ENCODE measurements at regions of chr5 and their contacts with region 1.

Region 1: GRCh38 chr5:40386289-40386688 is 293.4 kb upstream of the PTGER4 start:
- DNase-seq: no peak
- H3K4me3 ChIP-seq: no peak overlapping the region
- H3K27ac ChIP-seq: peak overlapping the region; percentile 91
- H3K4me1 ChIP-seq: peaks cover 56% of the 10 kb centered on the region
- H3K27me3 ChIP-seq: no peaks in the 10 kb centered on the region
- CTCF ChIP-seq: no peak

Region 2: DNA sequence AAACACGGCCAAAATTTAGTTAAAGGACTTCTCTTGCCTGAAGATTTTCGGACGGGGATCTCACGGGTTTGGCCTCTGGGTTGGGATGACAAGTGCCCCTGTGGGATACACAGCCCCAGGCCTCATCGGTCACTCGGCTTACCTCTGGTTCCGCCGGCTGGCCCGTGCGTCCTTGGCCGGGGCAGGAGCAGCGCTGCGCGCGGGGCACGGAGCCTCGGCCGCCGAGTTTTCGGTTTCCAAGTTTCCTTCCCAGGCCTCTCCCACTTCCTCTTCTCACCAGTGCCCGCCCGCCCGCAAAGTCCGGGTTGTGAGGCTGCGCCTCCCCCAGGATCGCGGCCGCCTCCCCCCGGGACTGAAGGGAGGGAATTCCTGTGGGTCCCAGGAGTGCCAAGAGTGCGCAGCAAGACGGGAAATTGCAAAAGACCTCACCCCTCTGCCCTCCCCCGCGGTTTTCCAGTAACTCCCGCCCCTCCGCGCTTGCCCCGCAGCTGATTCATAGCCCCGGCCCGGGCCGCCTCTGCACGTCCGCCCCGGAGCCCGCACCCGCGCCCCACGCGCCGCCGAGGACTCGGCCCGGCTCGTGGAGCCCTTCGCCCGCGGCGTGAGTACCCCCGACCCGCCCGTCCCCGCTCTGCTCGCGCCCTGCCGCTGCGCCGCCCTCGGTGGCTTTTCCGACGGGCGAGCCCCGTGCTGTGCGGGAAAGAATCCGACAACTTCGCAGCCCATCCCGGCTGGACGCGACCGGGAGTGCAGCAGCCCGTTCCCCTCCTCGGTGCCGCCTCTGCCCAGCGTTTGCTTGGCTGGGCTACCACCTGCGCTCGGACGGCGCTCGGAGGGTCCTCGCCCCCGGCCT is 1540.5 kb before region 1 on chr5 and contains the start of gene OSMR:
- CTCF ChIA-PET with region 1: no interaction called
- POLR2A ChIA-PET with region 1: no interaction called
- intact Hi-C with region 1: loop called (anchors 10 kb)
- DNase-seq: peak; percentile 92 to 100
- H3K4me3 ChIP-seq: peak within 1 kb of the TSS; percentile 79
- H3K27ac ChIP-seq: peak within 1 kb of the TSS; percentile 95
- H3K4me1 ChIP-seq: peaks cover 48% of the 10 kb centered on the region
- H3K27me3 ChIP-seq: no peaks in the 10 kb centered on the region
- CTCF ChIP-seq: no peak
- total RNA-seq, gene OSMR: 45.3 and 65.4 TPM in 2 replicates

Region 3: DNA sequence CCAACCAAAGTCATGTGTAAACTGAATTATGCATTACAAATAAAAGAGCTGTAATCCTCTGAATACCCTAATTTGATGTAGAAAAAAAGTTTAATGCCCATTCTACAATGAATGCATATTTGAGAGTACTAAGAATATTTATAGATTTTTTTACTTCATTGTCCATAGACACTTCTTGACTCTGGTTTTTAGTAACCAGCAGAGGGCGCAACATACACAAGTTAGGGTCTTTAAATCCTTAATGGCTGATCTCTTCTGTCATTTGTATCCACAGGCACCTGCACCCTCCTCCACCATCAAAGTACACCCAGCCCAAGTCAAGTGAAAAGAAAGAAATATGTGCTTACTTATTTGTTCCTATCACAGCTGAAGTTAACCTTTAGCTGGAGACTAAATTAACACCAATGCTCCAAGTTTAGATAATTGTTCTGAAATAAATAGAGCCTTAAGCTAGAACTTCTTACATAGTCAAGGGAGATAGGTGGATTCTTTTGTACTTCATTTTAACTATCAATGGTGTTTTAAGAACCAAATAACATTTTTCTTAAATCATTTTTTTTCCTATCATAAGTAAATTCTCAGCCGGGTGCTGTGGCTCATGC is 437.3 kb before region 1 on chr5:
- CTCF ChIA-PET with region 1: no interaction called
- POLR2A ChIA-PET with region 1: no interaction called
- intact Hi-C with region 1: loop called (anchors 1 kb)
- DNase-seq: peak; percentile 56 to 66
- H3K4me3 ChIP-seq: no peak overlapping the region
- H3K27ac ChIP-seq: no peak overlapping the region
- H3K4me1 ChIP-seq: no peaks in the 10 kb centered on the region
- H3K27me3 ChIP-seq: no peaks in the 10 kb centered on the region
- CTCF ChIP-seq: peak; percentile 96

Region 4: GRCh38 chr5:40307920-40308319 is 78.4 kb before region 1 on chr5:
- CTCF ChIA-PET with region 1: no interaction called
- POLR2A ChIA-PET with region 1: no interaction called
- intact Hi-C with region 1: no loop called
- DNase-seq: no peak
- H3K4me3 ChIP-seq: no peak overlapping the region
- H3K27ac ChIP-seq: no peak overlapping the region
- H3K4me1 ChIP-seq: no peaks in the 10 kb centered on the region
- H3K27me3 ChIP-seq: no peaks in the 10 kb centered on the region
- CTCF ChIP-seq: no peak

Region 5: DNA sequence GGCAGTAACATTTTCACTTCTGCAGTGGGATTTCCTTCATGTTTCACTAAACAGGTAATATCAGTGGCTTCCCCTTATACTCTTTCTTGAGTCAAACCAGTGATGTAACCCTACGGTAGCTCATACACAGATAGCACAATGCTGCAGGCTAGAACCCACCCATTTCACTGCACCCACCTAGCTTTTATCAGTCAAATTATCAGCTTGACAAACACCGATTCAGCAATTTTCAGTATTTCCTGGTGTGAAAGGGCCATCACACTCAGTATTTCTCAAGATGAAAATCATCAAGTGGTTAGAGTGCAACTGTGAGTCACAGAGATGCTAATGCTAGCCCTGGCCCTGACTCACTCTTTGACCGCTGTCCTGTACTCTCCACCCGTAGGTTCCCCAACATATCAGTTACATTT is 51.2 kb after region 1 on chr5:
- CTCF ChIA-PET with region 1: interaction called, 3 read pairs
- POLR2A ChIA-PET with region 1: interaction called, 7 read pairs
- intact Hi-C with region 1: loop called (anchors 1 kb)
- DNase-seq: peak; percentile 77 to 99
- H3K4me3 ChIP-seq: no peak overlapping the region
- H3K27ac ChIP-seq: peak overlapping the region; percentile 74
- H3K4me1 ChIP-seq: peaks cover 22% of the 10 kb centered on the region
- H3K27me3 ChIP-seq: no peaks in the 10 kb centered on the region
- CTCF ChIP-seq: no peak

Region 6: GRCh38 chr5:40551496-40552491 is 165.5 kb after region 1 on chr5:
- CTCF ChIA-PET with region 1: no interaction called
- POLR2A ChIA-PET with region 1: interaction called, 3 read pairs
- intact Hi-C with region 1: loop called (anchors 1 kb)
- DNase-seq: peak; percentile 81 to 98
- H3K4me3 ChIP-seq: peak overlapping the region; percentile 15; the same call in 1 of the 2 replicates
- H3K27ac ChIP-seq: peak overlapping the region; percentile 77
- H3K4me1 ChIP-seq: peaks cover 27% of the 10 kb centered on the region
- H3K27me3 ChIP-seq: no peaks in the 10 kb centered on the region
- CTCF ChIP-seq: no peak

Region 7: DNA sequence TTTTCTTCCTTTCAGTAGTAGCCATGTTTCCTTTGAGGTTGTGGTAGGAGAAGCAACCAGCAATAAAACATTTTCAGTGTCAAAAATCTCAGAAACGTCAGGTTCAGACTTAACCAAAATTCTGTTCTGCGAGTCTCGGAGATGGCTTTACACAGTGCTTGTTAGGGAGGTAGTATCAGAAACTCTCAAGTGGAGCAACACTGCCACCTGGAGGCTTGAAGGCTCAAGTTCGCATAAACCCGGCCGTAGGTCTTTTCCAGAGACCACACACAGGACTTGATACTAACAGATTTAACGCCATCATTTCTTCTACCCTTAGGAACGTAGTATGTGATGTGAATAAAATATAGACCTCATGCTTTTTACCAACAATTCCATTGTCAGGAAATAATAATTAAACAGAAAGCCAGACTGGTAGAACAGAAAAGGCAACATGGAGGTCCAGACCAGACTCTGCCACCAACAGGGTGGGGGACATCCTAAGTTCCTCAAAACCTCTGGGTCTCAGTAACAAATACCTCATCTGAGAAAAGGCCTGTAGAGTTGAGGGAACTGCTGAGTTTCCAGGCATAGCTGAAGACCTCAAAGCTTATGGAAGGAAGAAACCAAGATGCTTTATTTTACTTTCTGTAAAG is 302.0 kb after region 1 on chr5:
- CTCF ChIA-PET with region 1: no interaction called
- POLR2A ChIA-PET with region 1: interaction called, 3 read pairs
- intact Hi-C with region 1: loop called (anchors 2 kb)
- DNase-seq: peak; percentile 80 to 93
- H3K4me3 ChIP-seq: no peak overlapping the region
- H3K27ac ChIP-seq: 0 out of 2 replicates have a peak overlapping the region, but pooled peaks have one; percentile 2
- H3K4me1 ChIP-seq: peaks cover 52% of the 10 kb centered on the region
- H3K27me3 ChIP-seq: no peaks in the 10 kb centered on the region
- CTCF ChIP-seq: peak; percentile 98

Region 8: DNA sequence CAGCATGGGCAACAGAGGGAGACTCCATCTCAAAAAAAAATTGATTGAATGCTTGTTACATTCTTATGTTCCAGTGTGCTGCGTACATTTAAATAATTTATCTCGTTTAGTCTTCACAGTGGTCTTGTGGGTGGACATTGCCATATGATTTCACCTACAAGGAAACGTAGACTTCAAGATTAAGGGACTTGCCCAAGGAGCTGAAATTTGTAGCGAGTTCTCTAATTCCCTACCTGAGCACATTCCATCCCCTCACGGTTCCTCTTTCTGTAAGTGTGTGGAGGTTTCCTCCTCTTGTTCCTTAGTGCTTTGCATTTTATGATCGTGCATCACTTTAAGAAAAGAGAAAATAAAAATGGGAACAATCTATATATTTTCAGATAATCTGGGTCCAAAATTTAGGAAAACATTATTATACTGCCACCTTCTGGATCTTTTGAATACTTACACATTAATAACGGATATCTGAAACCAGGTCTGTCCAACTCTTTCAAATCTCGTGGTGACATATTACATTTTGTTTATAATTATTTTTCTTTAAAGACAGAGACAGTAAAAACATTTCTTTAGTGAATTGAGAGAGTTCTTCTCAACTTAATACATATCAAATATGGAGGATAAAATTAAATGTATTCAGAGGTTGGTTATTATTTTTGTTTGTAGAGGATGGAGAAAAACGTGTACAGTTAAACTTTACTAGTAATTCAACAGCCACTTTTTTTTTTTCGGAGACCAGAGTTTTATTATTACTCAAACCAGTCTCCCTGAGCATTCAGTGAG is 493.1 kb after region 1 on chr5:
- CTCF ChIA-PET with region 1: no interaction called
- POLR2A ChIA-PET with region 1: no interaction called
- intact Hi-C with region 1: loop called (anchors 10 kb)
- DNase-seq: peak; percentile 6 to 47
- H3K4me3 ChIP-seq: no peak overlapping the region
- H3K27ac ChIP-seq: no peak overlapping the region
- H3K4me1 ChIP-seq: no peaks in the 10 kb centered on the region
- H3K27me3 ChIP-seq: no peaks in the 10 kb centered on the region
- CTCF ChIP-seq: peak; percentile 90

Measured in PC-9 (cell line).